ENCODE measurements at regions of chr5 and their contacts with region 1.

Region 1: GRCh38 chr5:138402640-138403039 is 36.2 kb upstream of the REEP2 start:
- DNase-seq: no peak
- H3K4me3 ChIP-seq: no peak overlapping the region
- H3K27me3 ChIP-seq: no peaks in the 10 kb centered on the region
- CTCF ChIP-seq: no peak

Region 2: GRCh38 chr5:138528208-138528607 is 125.6 kb after region 1 on chr5:
- CTCF ChIA-PET with region 1: no interaction called
- POLR2A ChIA-PET with region 1: interaction called, 10 read pairs
- DNase-seq: no peak
- H3K4me3 ChIP-seq: no peak overlapping the region
- H3K27me3 ChIP-seq: no peaks in the 10 kb centered on the region
- CTCF ChIP-seq: no peak

Measured in BJ (cell line).